Activated naive CD8-positive, alpha-beta T cell treated with anti-CD3 and anti-CD28 coated beads, Interleukin-2, amount 10 ng/mL, durations not matched to agents 7 days and 5 days (primary cell): ENCODE measurements at regions of chr14 and their contacts with region 1.

Region 1: DNA sequence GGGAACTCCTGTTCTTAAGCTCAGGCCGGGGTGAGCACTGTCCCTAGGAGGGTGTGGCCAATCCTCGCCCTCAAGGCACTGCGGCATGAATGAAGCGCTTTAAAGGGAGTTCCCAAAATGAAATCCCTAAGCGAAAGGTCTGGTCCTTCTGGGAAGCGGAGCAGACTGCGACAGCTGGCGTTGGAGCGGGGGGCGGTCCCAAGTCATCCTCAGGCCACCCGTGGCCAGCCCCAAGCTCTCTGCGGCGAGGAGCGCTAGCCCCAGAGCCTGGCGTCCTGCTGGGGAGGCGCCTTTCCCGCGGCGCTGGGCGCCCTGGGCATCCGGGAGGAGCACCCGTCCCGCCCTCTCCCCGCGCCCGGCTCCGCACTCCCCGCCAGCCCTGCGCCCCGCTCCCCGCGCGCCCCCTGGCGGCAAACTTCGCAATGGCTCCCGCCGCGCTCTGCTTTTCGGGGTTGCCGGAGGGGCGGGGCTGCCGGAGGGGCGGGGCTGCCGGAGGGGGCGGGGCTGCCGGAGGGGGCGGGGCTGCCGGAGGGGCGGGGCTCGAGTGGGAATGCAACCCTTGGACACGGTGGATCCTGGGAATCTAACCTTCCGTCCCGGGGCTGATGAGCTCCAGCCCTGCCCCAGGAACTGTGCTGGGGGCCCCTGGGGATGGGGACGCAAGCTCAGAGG is 25.4 kb downstream of the ZBTB42 start:
- DNase-seq: peak; percentile 99
- ATAC-seq: peak; percentile 91
- H3K4me3 Mint-ChIP-seq: peak overlapping the region; percentile 82
- H3K27ac Mint-ChIP-seq: no peak overlapping the region
- H3K4me1 Mint-ChIP-seq: peaks cover 8% of the 10 kb centered on the region
- H3K27me3 Mint-ChIP-seq: peaks cover 27% of the 10 kb centered on the region

Region 2: DNA sequence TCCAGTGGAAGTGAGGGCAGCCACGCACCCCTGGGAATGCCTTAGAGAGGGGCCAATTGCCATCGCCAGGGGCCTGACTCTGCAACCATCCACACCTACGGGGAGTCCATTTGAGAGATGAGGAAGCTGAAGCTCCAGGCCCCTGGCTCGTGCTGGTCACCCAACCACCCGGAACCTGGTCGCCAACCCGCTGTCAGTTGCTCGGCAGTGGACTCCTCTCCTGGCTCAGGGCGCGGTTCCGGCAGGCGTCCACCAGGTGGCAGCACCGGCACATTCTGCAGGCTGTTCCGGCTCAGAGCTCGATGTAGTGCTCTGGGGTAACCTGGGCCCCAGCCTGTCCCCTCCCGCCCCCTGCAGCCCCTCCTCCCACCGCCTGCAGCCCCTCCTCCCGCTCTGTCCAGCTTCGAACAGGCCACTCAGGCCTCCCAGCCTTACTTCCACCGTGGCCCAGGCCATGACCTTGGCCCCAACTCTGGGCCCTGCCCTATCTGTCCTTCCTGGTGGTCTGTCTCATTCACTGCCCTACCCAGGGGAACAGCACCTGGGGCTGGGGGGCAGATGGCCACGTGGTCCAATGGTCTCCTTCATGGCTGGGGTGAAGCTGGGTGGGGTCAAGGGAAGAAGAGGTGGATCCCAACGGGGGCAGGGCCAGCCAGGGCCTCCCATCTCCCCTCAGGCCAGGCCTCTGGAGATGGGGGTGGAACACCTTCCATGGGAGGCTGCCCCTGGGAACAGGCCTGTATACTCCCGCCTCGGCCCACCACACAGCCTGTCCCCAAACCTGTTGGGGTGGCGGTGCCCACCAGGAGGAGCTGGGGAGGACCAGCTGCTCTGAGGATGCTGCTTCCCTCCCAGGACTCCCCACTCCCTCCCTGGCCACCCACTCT is 57.6 kb before region 1 on chr14:
- POLR2A ChIA-PET with region 1: interaction called, 10 read pairs
- DNase-seq: peak; percentile 97
- ATAC-seq: peak; percentile 94
- H3K4me3 Mint-ChIP-seq: no peak overlapping the region
- H3K27ac Mint-ChIP-seq: peak overlapping the region; percentile 16
- H3K4me1 Mint-ChIP-seq: peaks cover 3% of the 10 kb centered on the region
- H3K27me3 Mint-ChIP-seq: no peaks in the 10 kb centered on the region

Region 3: DNA sequence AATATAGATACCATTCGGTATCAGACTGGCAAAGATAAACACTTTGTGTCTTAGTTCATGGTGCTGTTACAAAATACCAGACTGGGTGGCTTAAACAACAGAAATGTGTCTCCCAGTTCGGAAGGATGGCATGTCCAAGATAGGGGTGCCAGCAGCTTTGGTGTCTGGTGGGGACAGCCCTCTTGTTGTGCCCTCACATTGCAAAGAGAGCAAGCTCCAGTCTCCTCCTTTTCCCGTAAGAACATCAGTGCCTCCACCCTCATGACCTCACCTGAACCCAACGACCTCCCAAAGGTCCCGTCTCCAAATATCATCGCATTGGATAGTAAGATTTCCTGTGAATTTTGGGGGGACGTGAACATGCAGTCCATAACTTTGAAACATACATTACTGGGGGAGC is 13.0 kb before region 1 on chr14:
- POLR2A ChIA-PET with region 1: no interaction called
- DNase-seq: no peak
- ATAC-seq: no peak
- H3K4me3 Mint-ChIP-seq: no peak overlapping the region
- H3K27ac Mint-ChIP-seq: no peak overlapping the region
- H3K4me1 Mint-ChIP-seq: peaks cover 16% of the 10 kb centered on the region
- H3K27me3 Mint-ChIP-seq: no peaks in the 10 kb centered on the region